ENCODE measurements at regions of chr12 and their contacts with region 1.

Region 1: GRCh38 chr12:98329589-98329988 is 185.8 kb upstream of the TMPO start:
- DNase-seq: no peak
- H3K4me3 ChIP-seq: no peak overlapping the region
- H3K4me3 Mint-ChIP-seq: no peak overlapping the region
- H3K27ac Mint-ChIP-seq: no peak overlapping the region
- H3K4me1 ChIP-seq: no peaks in the 10 kb centered on the region
- H3K4me1 Mint-ChIP-seq: no peaks in the 10 kb centered on the region
- H3K27me3 ChIP-seq: no peaks in the 10 kb centered on the region
- H3K27me3 Mint-ChIP-seq: no peaks in the 10 kb centered on the region
- CTCF ChIP-seq: no peak

Region 2: DNA sequence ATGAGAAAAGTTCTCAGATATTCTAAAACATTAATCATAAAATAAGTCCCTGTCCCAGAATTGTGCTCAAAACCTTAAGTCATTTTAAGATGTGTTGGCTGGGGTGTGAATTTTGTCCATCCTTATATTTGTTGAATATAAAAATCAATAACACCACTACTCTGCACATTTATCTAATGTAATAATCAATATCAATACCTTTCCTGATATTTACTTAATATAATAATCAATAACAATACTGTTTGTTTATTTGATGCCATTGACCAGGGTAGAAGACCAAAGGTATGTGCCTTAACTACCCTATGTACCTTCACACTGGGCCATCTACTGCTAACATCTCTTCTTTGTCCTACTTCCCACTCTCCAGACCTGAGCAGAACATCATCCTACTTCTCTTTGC is 46.2 kb before region 1 on chr12:
- CTCF ChIA-PET with region 1: no interaction called
- POLR2A ChIA-PET with region 1: no interaction called
- intact Hi-C with region 1: loop called (anchors 1 kb)
- DNase-seq: no peak
- H3K4me3 ChIP-seq: no peak overlapping the region
- H3K4me3 Mint-ChIP-seq: no peak overlapping the region
- H3K27ac Mint-ChIP-seq: no peak overlapping the region
- H3K4me1 ChIP-seq: no peaks in the 10 kb centered on the region
- H3K4me1 Mint-ChIP-seq: no peaks in the 10 kb centered on the region
- H3K27me3 ChIP-seq: no peaks in the 10 kb centered on the region
- H3K27me3 Mint-ChIP-seq: peaks cover 7% of the 10 kb centered on the region
- CTCF ChIP-seq: no peak

Measured in Caco-2 (cell line).